ENCODE measurements at regions of chr10 and their contacts with region 1.

Region 1: DNA sequence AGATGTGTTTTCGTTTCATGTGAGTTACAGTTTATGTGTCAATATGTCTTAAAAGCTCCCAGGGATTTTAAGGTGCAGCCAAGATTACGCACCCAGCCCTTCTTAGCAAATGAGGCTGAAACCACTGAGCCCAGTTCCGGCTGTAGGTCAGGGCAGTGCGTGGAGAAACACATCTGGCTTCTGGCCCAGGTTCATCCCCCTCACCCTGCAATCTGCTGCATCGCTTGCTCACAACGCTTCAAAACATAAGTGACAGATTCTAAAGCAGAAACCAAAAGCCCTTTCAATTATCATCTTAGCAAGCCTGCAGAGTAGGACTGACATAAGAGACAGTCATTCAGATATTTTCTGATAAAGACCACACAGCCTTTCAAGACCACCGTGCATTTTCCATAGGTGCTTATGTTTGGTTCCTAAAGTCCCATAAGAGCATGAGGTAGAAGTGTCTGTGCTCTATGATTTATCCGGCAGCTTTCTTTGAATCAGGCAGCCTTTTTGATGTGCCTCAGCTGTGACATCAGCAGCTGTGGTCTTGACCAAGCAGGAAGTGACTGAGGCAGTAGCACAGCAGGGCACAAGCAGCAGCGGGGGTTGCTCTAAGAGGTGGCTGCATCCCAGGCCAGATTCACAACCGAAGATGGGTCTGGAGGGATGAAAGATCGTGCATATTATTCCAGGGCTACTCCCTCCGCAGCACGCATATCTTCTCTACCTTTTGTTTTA is 72.1 kb upstream of the LYZL2 start:
- DNase-seq: peak; percentile 93
- H3K4me3 Mint-ChIP-seq: peak overlapping the region; percentile 50
- H3K27ac Mint-ChIP-seq: peak overlapping the region; percentile 88
- H3K4me1 Mint-ChIP-seq: peaks cover 85% of the 10 kb centered on the region
- H3K27me3 Mint-ChIP-seq: no peaks in the 10 kb centered on the region

Region 2: DNA sequence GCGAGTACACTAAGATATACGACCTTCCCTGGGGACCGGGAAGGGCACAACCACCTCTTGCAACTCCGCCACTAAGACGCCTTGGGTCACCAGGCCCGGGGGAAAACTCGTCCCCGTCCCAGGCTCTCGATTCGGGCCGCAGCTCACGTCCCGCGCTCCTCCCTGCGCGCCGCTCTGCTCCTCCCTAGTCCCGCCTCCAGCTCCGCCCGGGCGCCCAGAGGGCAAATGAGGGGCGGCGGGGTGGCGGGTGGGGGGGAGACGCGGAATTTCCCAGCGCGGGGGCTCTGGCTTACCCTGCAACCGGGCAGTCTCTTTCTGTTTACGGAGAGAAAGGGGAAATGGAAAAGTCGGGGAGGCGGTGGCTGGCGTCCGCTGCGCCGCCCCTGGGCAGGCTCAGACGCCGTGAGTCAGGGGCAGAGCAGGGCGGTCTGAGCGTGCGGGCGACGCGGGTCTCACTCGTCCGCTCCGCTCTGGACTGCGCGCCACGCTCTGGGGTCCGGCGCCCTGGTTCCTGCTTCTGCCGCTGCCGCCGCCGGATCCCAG is 267.8 kb before region 1 on chr10 and contains the start of gene MAP3K8:
- CTCF ChIA-PET with region 1: no interaction called
- intact Hi-C with region 1: loop called (anchors 2 kb)
- DNase-seq: peak; percentile 87
- H3K4me3 Mint-ChIP-seq: peak within 1 kb of the TSS; percentile 84
- H3K27ac Mint-ChIP-seq: peak within 1 kb of the TSS; percentile 67
- H3K4me1 Mint-ChIP-seq: peaks cover 41% of the 10 kb centered on the region
- H3K27me3 Mint-ChIP-seq: no peaks in the 10 kb centered on the region
- total RNA-seq, gene MAP3K8: 13.6 to 14.5 TPM

Region 3: GRCh38 chr10:30902621-30903396 is 201.2 kb after region 1 on chr10:
- CTCF ChIA-PET with region 1: no interaction called
- intact Hi-C with region 1: no loop called
- DNase-seq: no peak
- H3K4me3 Mint-ChIP-seq: no peak overlapping the region
- H3K27ac Mint-ChIP-seq: no peak overlapping the region
- H3K4me1 Mint-ChIP-seq: no peaks in the 10 kb centered on the region
- H3K27me3 Mint-ChIP-seq: no peaks in the 10 kb centered on the region

Region 4: GRCh38 chr10:30986053-30986555 is 284.5 kb after region 1 on chr10:
- CTCF ChIA-PET with region 1: no interaction called
- intact Hi-C with region 1: loop called (anchors 5 kb)
- DNase-seq: no peak
- H3K4me3 Mint-ChIP-seq: no peak overlapping the region
- H3K27ac Mint-ChIP-seq: peak overlapping the region; percentile 55
- H3K4me1 Mint-ChIP-seq: peaks cover 12% of the 10 kb centered on the region
- H3K27me3 Mint-ChIP-seq: no peaks in the 10 kb centered on the region

Region 5: DNA sequence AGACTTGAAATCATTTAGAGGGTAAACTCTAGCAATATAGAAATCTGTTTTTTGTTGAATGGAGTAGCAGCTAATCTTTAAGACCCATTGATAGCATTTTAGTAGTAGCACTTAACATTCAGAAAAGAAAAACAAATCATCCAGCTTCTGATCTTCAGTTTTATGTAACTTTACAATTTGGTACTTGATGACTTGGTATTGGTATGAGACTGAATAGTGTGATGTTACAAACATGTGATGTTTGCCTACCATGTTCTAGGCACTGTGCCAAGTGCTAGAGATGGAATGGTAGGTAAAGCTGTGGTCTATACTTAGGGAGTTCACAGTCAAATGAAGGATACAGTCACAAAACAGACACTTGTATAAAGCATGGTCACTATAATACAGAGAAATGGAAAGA is 638.7 kb after region 1 on chr10:
- CTCF ChIA-PET with region 1: no interaction called
- intact Hi-C with region 1: loop called (anchors 2 kb)
- DNase-seq: peak; percentile 49
- H3K4me3 Mint-ChIP-seq: no peak overlapping the region
- H3K27ac Mint-ChIP-seq: no peak overlapping the region
- H3K4me1 Mint-ChIP-seq: peaks cover 31% of the 10 kb centered on the region
- H3K27me3 Mint-ChIP-seq: no peaks in the 10 kb centered on the region

Region 6: DNA sequence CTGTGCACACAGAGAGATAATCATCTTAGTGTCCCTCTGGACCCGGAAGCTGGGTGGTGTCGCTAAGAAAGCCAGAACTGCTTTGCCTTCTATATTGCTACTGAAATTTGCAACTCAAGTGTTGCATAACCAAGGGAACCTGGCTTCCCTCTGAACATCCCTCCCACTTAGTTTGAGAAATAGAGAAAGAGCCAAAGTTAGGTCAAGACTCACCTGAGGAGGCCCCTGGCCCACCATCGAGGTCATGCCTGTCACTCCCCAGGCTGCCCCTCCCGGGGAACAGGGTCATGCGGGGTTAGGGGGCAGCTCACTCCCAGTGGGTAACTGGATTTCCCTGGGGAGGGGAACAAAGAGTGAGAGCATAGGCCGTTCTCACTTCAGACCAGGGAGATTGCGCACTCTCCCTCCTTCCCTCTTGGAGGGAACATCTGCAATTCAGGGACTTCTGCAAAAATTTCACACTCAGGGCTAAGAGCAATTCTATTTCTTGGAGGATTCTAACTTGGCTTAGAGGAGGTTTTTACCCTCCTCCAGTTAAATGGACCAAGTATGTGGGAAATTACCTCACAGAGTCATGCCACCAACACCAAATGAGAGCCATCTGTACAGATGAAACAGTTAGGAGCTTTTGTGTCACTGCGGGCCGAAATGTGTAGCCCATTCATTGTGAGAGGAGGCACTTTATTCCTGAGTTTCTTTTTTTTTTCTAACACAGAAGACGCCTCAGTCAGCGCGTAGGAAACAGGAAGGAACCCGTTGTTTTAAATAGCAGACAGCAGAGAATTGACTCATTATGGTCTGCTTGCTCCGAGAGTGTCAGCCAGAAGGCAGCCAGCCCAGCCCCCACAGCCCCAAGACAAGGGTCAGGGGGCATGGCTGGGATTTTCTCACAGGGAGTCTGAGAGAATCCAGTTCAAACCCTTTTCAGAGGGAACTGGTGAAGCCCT is 1005.8 kb after region 1 on chr10:
- CTCF ChIA-PET with region 1: no interaction called
- intact Hi-C with region 1: loop called (anchors 2 kb)
- DNase-seq: peak; percentile 85
- H3K4me3 Mint-ChIP-seq: peak overlapping the region; percentile 5
- H3K27ac Mint-ChIP-seq: peak overlapping the region; percentile 83
- H3K4me1 Mint-ChIP-seq: peaks cover 22% of the 10 kb centered on the region
- H3K27me3 Mint-ChIP-seq: no peaks in the 10 kb centered on the region

Region 7: GRCh38 chr10:31921031-31921430 is 1219.4 kb after region 1 on chr10:
- CTCF ChIA-PET with region 1: no interaction called
- intact Hi-C with region 1: loop called (anchors 5 kb)
- DNase-seq: peak; percentile 45
- H3K4me3 Mint-ChIP-seq: peak overlapping the region; percentile 4
- H3K27ac Mint-ChIP-seq: peak overlapping the region; percentile 77
- H3K4me1 Mint-ChIP-seq: peaks cover 54% of the 10 kb centered on the region
- H3K27me3 Mint-ChIP-seq: no peaks in the 10 kb centered on the region

Measured in activated naive CD4-positive, alpha-beta T cell treated with anti-CD3 and anti-CD28 coated beads for 36 hours (primary cell).